ENCODE measurements at regions of chr1 and their contacts with region 1.

Region 1: GRCh38 chr1:178172954-178173353 is 79.0 kb downstream of the RASAL2 start:
- DNase-seq: no peak
- ATAC-seq: peak in 1 of 2 donors; percentile 47

Region 2: GRCh38 chr1:177975588-177976495 is 197.1 kb before region 1 on chr1:
- intact Hi-C with region 1: no loop called
- DNase-seq: no peak
- ATAC-seq: no peak

Region 3: DNA sequence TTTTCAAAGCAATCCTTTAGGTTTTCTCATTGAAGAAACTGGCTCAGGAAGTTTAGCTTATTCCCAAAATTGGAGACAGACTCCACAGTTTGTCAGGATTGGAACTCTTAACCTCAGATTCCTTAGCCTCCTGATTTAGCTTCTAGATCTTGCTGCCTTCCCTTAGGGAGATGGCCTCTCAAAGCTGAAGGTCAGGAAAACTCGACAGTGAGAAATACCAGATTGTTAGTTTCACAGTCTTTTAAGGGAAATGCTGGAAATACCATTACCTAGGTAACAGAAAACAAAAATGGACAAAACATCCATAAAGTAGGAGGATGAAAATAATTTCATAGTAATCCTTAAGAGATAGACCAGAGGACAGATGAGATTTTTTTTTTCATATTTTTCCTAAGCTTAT is 71.3 kb before region 1 on chr1:
- intact Hi-C with region 1: loop called in 1 of 2 experiments (anchors 10 kb)
- DNase-seq: no peak
- ATAC-seq: peak; percentile 44 to 50

Region 4: GRCh38 chr1:178238722-178239510 is 66.0 kb after region 1 on chr1:
- intact Hi-C with region 1: loop called in 1 of 2 experiments (anchors 10 kb)
- DNase-seq: no peak
- ATAC-seq: peak; percentile 41 to 94

Measured in left cardiac atrium (tissue), 4 donors.